ENCODE measurements at regions of chr11 and their contacts with region 1.

Region 1: GRCh38 chr11:110200241-110200640 is 96.2 kb downstream of the RDX start:
- DNase-seq: no peak
- ATAC-seq: no peak

Region 2: DNA sequence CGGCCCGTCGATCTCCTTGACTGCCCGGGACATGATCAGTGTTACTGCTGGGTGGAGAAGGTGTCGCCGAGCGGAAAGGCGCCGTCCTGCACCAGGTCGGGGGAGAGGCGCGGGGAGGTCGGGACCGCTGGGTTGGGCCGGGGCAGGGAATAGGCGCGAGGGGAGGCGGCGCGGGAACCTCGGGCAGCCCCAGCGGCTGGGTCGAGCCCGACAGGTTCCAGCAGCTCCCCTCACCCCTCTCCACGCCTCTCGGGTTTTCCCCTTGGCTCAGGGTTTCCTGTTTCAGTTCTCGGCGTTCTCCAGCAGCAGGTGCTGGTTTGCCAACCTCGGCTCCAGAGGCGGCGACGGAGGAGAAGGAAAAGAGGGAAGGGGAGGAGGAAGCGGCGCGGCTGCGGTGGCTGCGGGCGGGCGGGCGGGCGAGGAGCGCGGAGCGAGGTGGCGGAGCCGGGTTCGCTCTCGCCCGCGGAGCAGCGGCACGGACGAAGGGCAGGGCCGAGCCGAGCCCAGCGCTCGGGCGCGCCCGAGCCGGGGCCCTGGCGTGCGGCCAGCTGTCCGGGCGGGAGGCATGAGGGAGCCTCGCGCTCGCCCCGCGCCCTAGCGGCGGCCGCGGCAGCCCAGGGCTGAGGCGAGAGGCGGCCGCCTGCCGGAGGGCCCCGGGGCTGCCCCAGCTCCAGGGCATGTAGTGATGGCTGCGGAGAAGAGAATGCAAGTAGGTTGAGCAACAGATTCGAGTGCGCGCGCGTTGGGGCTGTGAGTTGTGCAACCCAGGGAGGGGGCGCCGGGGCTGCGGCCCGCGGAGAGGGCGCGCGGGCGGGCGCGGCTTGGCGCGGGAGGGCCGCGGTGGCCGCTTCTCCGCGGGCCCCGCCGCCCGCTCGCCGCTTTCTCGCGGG is 107.5 kb before region 1 on chr11 and contains the start of gene ZC3H12C:
- intact Hi-C with region 1: no loop called
- DNase-seq: peak; percentile 85
- ATAC-seq: peak; percentile 85 to 94
- total RNA-seq, gene ZC3H12C: 12.5 to 18.7 TPM

Region 3: GRCh38 chr11:110362971-110363509 is 162.8 kb after region 1 on chr11:
- intact Hi-C with region 1: loop called (anchors 2 to 5 kb)
- DNase-seq: no peak
- ATAC-seq: peak; percentile 38 to 44

Region 4: DNA sequence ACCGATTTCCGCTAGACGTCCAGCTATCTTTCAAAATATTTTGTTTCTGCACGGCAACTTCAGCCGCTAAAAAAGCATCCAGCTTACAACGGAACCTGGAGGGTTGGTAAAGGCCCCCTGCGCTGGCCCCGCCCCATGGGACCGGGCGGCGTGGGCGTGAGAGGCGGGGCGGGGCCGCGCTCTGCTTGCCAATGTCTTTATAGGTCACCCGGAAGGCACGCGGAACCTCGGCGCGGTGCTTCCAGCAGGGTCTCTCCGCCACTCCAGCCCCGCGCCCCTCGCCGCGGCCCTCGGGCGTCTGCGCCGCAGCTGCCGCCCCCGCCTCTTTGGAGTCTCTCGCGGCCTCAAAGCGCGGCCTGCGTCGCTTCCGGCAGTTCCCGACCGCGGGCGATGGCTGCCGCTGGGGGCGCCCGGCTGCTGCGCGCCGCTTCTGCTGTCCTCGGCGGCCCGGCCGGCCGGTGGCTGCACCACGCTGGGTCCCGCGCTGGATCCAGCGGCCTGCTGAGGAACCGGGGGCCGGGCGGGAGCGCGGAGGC is 229.6 kb after region 1 on chr11 and contains the start of gene FDX1:
- intact Hi-C with region 1: loop called in 1 of 2 experiments (anchors 2 kb)
- DNase-seq: peak; percentile 89
- ATAC-seq: peak; percentile 95 to 96
- total RNA-seq, gene FDX1: 11.8 to 16.2 TPM

Region 5: GRCh38 chr11:111230122-111230465 is 1029.9 kb after region 1 on chr11:
- intact Hi-C with region 1: loop called in 1 of 2 experiments (anchors 5 kb)
- DNase-seq: no peak
- ATAC-seq: peak; percentile 49 to 53